SK-N-SH (cell line): ENCODE measurements at regions of chr17 and their contacts with region 1.

Region 1: DNA sequence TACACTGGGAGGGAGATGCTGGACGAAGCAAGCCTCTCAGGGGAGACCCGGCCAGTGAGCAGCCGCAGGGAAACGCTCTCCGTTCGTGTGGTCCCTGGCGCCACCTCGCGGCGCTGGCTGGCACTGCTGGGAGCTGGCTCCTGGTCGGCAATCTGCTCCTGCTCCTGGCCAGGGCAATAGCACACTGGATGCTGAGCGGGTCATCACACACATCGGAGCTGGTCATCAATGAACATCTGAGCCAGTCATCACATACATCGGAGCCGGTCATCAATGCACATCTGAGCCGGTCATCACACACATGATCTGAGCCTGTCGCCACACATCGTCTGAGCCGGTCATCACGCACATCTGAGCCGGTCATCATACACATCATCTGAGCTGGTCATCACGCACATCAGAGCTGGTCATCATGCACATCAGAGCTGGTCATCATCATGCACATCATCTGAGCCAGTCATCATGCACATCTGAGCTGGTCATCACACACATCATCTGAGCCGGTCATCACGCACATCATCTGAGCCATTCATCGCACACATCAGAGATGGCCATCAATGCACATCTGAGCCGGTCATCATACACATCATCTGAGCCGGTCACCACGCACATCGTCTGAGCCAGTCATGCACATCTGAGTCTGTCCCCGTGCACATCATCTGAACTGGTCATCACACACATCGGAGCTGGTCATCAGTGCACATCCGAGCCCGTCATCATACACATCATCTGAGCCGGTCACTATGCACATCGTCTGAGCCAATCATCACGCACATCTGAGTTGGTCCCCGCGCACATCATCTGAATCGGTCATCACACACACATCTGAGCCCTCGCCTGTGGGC is 217.3 kb downstream of the RBFOX3 start:
- DNase-seq: peak; percentile 97
- H3K4me3 ChIP-seq: no peak overlapping the region; a peak in 1 of 4 replicates
- H3K27ac ChIP-seq: no peak overlapping the region
- H3K4me1 ChIP-seq: no peaks in the 10 kb centered on the region; a peak in 1 of 4 replicates
- H3K27me3 ChIP-seq: peaks cover 64% of the 10 kb centered on the region
- CTCF ChIP-seq: peak; percentile 97
- EP300 ChIP-seq: no peak
- RAD21 ChIP-seq: peak; percentile 97

Region 2: DNA sequence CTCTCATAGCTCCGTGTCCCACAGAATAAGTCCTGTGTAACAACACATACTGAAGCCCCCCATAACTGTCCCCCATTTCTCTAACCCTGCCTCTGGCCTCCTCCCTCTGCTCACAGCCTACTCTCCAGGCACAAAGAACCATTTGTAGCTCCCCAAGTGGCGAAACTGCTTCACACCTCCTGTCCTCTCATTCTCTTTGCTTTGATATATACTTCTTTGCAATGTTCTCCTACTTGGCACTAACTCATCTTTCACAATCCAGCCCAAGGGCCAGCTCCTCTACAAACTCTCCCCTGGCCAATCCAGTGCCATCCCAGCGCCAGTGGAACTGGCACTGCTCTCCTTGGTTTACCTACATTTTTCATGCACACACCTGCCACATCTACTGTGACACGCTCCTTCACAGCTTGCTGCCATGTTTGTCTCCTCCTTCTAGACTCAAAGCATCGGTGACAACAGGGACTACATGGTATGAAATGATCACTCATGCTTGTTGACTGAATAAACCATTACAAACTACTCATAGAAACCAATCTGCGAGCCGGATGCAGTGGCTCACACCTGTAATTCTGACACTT is 624.3 kb before region 1 on chr17:
- CTCF ChIA-PET with region 1: no interaction called
- POLR2A ChIA-PET with region 1: no interaction called
- DNase-seq: no peak
- H3K4me3 ChIP-seq: no peak overlapping the region
- H3K27ac ChIP-seq: no peak overlapping the region
- H3K4me1 ChIP-seq: peaks cover 0 to 6% of the 10 kb centered on the region in 2 experiments; a peak in 1 of 4 replicates
- H3K27me3 ChIP-seq: no peaks in the 10 kb centered on the region
- CTCF ChIP-seq: peak; percentile 16; the same call in 1 of the 2 replicates
- EP300 ChIP-seq: no peak
- RAD21 ChIP-seq: no peak

Region 3: DNA sequence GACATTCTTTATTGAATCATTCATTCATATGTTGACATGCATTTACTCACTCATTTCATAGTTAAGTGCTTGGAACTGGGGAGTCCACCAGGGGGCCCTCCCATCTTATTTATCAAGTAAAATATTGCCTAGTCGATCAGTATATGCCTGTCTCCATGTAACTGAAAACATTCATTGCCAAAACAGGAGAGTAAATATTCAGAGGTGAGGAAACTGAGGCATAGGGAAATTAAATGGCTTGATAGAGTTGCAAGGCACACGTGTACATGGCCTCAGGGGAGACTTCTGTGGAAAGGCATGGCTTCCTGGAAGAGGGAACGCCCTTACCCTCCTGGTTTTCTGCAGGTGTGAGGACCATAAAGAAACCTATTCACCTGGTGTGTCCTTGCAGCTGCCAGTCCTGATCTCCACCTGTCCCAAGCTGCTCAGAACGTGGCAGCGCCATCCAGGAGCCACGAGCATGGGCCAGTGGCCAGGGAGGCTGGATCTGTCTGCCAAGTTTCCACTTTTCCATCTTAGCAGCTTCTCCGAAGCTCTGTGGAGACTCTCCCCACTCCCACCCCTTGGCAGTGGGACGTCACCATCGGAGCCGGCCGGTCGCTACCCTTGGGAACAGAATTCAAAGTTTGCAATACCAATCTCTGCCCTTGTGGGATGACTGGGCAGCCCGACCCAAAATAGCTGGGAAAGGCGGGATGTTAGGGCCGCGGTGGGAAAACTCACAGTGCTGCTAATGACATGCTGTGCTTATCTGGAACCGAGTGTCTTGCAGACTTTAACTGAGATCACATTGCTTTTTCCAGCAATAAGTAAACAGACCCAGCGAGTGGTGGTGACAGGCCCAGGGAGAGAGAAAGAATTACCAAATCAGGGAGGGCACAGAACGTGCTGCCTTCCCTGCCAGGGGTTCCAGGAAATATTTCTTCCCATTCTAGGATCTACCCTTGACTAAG is 373.7 kb before region 1 on chr17:
- CTCF ChIA-PET with region 1: interaction called, 57 read pairs
- POLR2A ChIA-PET with region 1: no interaction called
- DNase-seq: peak; percentile 81
- H3K4me3 ChIP-seq: no peak overlapping the region; a peak in 1 of 4 replicates
- H3K27ac ChIP-seq: no peak overlapping the region
- H3K4me1 ChIP-seq: peaks cover 3 to 12% of the 10 kb centered on the region in 2 experiments; a peak in 3 of 4 replicates
- H3K27me3 ChIP-seq: no peaks in the 10 kb centered on the region
- CTCF ChIP-seq: peak; percentile 99
- EP300 ChIP-seq: no peak
- RAD21 ChIP-seq: peak; percentile 98

Region 4: GRCh38 chr17:79087428-79088143 is 306.0 kb before region 1 on chr17:
- CTCF ChIA-PET with region 1: interaction called, 1,305 read pairs
- POLR2A ChIA-PET with region 1: interaction called, 10 read pairs
- DNase-seq: peak; percentile 97
- H3K4me3 ChIP-seq: no peak overlapping the region; a peak in 1 of 4 replicates
- H3K27ac ChIP-seq: no peak overlapping the region
- H3K4me1 ChIP-seq: peaks cover 0 to 9% of the 10 kb centered on the region in 2 experiments; a peak in 1 of 4 replicates
- H3K27me3 ChIP-seq: no peaks in the 10 kb centered on the region
- CTCF ChIP-seq: peak; percentile 97
- EP300 ChIP-seq: no peak
- RAD21 ChIP-seq: peak; percentile 96

Region 5: DNA sequence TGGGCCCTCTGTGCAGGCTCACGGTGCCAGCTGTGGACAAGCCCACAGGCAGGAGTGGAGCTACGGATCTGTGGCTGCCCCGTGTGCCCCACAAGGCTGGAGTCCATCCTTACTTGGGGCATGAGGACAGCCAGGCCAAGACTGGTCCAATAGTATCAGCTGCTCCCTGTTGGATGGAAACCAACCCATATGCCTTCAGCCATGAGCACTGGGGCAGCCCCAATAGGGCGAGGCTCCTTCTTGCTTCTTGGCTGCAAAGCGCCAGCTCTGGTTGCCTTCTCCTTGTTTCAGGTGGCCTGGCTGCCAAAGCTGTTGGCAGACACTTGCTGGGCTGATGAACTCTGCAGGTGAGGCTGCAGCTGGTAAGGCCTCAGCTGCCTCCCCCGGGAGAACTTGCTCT is 131.0 kb before region 1 on chr17:
- CTCF ChIA-PET with region 1: interaction called, 43 read pairs
- POLR2A ChIA-PET with region 1: no interaction called
- DNase-seq: no peak
- H3K4me3 ChIP-seq: no peak overlapping the region
- H3K27ac ChIP-seq: no peak overlapping the region
- H3K4me1 ChIP-seq: peaks cover 0 to 55% of the 10 kb centered on the region in 2 experiments; a peak in 2 of 4 replicates
- H3K27me3 ChIP-seq: peaks cover 53% of the 10 kb centered on the region
- CTCF ChIP-seq: no peak
- EP300 ChIP-seq: no peak
- RAD21 ChIP-seq: no peak

Region 6: GRCh38 chr17:79342376-79342775 is 51.2 kb before region 1 on chr17:
- CTCF ChIA-PET with region 1: interaction called, 10 read pairs
- POLR2A ChIA-PET with region 1: no interaction called
- DNase-seq: no peak
- H3K4me3 ChIP-seq: no peak overlapping the region
- H3K27ac ChIP-seq: no peak overlapping the region
- H3K4me1 ChIP-seq: no peaks in the 10 kb centered on the region
- H3K27me3 ChIP-seq: no peaks in the 10 kb centered on the region; the same call in 1 of the 2 replicates
- CTCF ChIP-seq: no peak
- EP300 ChIP-seq: no peak
- RAD21 ChIP-seq: no peak

Region 7: DNA sequence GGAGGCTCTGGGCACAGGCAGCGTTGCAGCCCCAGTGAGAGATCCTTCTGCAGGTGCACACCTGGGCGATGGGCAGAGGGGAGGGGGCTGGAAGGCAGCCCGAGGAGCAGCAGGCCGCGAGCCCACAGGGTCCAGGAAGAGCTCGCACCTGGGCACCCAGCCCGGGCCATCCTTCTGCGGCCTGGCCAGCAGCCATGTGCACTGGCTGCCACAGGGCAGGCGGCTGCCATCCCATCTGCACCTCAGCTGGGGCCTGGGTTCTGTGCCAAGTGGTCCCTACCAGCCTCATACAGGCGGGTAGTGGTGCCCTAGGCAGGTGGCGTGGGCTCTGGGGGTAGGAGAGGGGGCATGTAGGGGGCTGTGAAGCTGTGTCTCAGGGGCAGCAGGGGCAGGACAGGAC is 20.0 kb after region 1 on chr17:
- CTCF ChIA-PET with region 1: interaction called, 333 read pairs
- POLR2A ChIA-PET with region 1: no interaction called
- DNase-seq: peak; percentile 72
- H3K4me3 ChIP-seq: no peak overlapping the region
- H3K27ac ChIP-seq: no peak overlapping the region
- H3K4me1 ChIP-seq: peaks cover 0 to 16% of the 10 kb centered on the region in 2 experiments; a peak in 1 of 4 replicates
- H3K27me3 ChIP-seq: peaks cover 53% of the 10 kb centered on the region
- CTCF ChIP-seq: no peak
- EP300 ChIP-seq: no peak
- RAD21 ChIP-seq: no peak

Region 8: DNA sequence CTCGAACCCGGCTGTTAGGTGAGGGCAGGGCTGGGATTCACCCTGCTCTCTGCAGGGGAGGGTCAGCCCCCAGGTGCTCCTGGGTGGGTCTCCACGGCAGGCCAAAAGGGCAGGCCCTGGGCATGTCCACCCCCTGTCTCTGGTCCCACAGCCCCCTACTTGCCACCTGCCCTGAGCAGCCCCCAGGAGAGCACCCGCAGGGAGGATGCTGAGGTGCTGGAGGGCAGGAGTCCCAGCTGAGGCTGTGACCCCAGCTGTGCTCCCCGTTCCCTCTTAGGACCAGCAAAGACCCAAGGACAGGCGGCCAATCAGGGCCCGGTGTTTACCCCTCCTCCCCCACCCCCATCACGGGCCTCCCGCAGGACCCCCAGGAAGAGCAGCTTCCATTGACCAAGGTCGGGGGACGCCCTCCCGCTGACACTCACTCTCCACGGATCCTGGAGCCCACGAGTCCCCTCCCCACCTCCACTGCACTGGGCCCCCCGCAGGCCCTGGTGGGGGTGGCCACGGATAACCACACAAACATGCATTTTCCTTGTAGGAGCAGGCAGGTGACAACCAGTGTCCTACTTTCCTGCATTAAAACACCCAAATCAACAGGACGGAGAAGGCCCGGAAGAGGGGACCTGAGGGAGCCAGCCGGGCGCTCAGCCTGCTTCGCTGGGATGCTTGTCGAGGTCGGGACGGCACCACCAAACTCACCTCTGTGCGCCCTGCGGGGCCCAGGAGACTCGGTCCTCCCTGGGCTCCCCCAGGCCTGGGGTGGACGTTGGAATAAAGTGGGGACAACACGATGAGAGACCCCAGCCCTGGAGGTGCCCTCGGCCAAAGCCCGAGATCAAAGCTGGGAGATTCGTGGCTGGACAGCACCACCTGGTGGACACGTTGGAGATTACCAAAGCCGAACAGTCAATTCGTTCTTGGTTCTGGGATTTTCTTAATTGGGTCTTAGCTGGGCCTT is 314.6 kb after region 1 on chr17:
- CTCF ChIA-PET with region 1: interaction called, 66 read pairs
- POLR2A ChIA-PET with region 1: no interaction called
- DNase-seq: peak; percentile 89
- H3K4me3 ChIP-seq: no peak overlapping the region
- H3K27ac ChIP-seq: no peak overlapping the region
- H3K4me1 ChIP-seq: no peaks in the 10 kb centered on the region
- H3K27me3 ChIP-seq: no peaks in the 10 kb centered on the region
- CTCF ChIP-seq: peak; percentile 83
- EP300 ChIP-seq: no peak
- RAD21 ChIP-seq: peak; percentile 92